Transverse colon (tissue), 4 donors: ENCODE measurements at regions of chr21 and their contacts with region 1.

Region 1: DNA sequence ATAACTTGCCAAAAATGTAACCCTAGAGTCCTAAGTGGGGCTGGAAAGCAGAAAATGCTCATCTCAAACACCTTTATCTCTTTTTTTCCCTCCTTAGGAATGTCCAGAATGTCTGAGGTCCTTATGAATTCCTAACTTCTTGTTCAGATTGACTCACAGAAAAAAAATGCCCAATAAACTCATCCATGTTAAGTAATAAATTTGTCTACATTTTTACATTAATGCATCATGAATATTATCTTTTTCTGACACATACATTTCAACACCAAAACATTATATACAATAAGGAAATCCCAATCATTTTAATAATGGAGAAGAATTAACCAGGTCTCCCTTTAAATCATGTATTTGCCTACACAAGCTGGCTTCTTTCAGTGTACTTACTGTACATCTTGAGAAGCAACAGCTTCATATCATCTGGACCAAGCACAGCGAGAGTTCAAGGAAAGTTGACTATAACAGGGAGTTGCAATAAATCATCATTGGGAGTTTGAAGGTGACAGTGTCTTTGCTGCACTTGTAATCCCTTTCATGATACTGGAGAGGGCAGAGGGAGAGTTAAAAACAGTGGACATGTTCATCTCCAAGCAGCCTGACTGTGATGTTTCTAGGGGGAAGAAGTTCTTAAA is 565.2 kb downstream of the LTN1 start:
- DNase-seq: no peak
- H3K4me3 ChIP-seq: no peak overlapping the region
- H3K27ac ChIP-seq: no peak overlapping the region
- H3K4me1 ChIP-seq: no peaks in the 10 kb centered on the region
- H3K27me3 ChIP-seq: no peaks in the 10 kb centered on the region
- CTCF ChIP-seq: no peak
- EP300 ChIP-seq: no peak
- POLR2A ChIP-seq: no peak

Region 2: DNA sequence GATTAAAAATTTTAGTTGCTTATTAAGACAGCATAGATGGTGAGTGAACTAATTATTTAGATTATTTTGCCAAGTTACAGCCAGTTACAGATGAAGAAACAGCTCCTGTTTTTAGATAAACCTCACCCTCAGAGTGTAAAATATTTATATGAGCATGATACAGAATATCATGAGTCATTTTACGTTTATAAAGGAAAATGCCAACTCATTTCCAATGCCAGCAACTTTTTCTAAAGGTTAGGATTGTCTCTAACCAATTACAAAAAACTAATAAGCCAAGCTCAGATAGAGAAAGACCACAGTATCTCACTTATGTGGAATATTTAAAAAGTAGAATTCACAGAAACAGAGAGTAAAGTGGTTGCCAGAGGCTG is 24.9 kb before region 1 on chr21:
- in situ Hi-C with region 1: no loop called
- intact Hi-C with region 1: no loop called
- DNase-seq: no peak
- H3K4me3 ChIP-seq: no peak overlapping the region
- H3K27ac ChIP-seq: no peak overlapping the region
- H3K4me1 ChIP-seq: no peaks in the 10 kb centered on the region
- H3K27me3 ChIP-seq: no peaks in the 10 kb centered on the region
- CTCF ChIP-seq: no peak
- EP300 ChIP-seq: no peak
- POLR2A ChIP-seq: no peak

Region 3: GRCh38 chr21:28554660-28555475 is 127.4 kb after region 1 on chr21:
- in situ Hi-C with region 1: no loop called
- intact Hi-C with region 1: loop called (anchors 5 kb)
- DNase-seq: no peak
- H3K4me3 ChIP-seq: no peak overlapping the region
- H3K27ac ChIP-seq: no peak overlapping the region
- H3K4me1 ChIP-seq: no peaks in the 10 kb centered on the region
- H3K27me3 ChIP-seq: no peaks in the 10 kb centered on the region
- CTCF ChIP-seq: no peak
- EP300 ChIP-seq: no peak
- POLR2A ChIP-seq: no peak

Region 4: GRCh38 chr21:28604946-28605537 is 177.5 kb after region 1 on chr21:
- in situ Hi-C with region 1: no loop called
- intact Hi-C with region 1: no loop called
- DNase-seq: no peak
- H3K4me3 ChIP-seq: no peak overlapping the region
- H3K27ac ChIP-seq: no peak overlapping the region
- H3K4me1 ChIP-seq: no peaks in the 10 kb centered on the region
- H3K27me3 ChIP-seq: no peaks in the 10 kb centered on the region
- CTCF ChIP-seq: no peak
- EP300 ChIP-seq: no peak
- POLR2A ChIP-seq: no peak